PC-3 (cell line): ENCODE measurements at regions of chr7 and their contacts with region 1.

Region 1: DNA sequence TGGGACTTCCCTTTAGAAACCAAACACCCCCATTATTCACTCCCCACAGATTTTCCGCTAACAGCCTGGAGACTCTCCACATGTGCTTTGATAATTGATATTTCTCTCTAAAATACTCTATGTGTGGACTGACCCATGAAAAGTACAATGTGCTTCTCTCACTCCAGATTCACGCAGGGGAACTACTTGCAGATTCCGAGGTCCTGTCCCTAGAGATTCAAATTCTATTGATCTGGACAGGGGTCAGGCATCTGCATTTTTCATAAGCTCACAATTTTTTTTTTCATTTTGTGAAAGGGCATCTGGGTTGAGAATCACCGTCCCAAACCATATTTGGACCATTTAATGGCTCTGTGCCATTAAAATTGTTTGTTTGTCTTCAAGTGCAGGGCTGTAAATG is 98.7 kb downstream of the CALCR start:
- DNase-seq: no peak
- ATAC-seq: no peak
- H3K4me3 ChIP-seq: no peak overlapping the region
- H3K27ac ChIP-seq: no peak overlapping the region
- H3K4me1 ChIP-seq: no peaks in the 10 kb centered on the region
- H3K27me3 ChIP-seq: peaks cover 34% of the 10 kb centered on the region; the same call in 1 of the 2 replicates
- CTCF ChIP-seq: no peak

Region 2: GRCh38 chr7:93298671-93299070 is 177.1 kb before region 1 on chr7:
- CTCF ChIA-PET with region 1: no interaction called
- POLR2A ChIA-PET with region 1: no interaction called
- intact Hi-C with region 1: no loop called
- DNase-seq: no peak
- ATAC-seq: no peak
- H3K4me3 ChIP-seq: no peak overlapping the region
- H3K27ac ChIP-seq: no peak overlapping the region
- H3K4me1 ChIP-seq: no peaks in the 10 kb centered on the region
- H3K27me3 ChIP-seq: no peaks in the 10 kb centered on the region
- CTCF ChIP-seq: no peak

Region 3: GRCh38 chr7:93544691-93545090 is 68.9 kb after region 1 on chr7:
- CTCF ChIA-PET with region 1: no interaction called
- POLR2A ChIA-PET with region 1: no interaction called
- intact Hi-C with region 1: loop called (anchors 1 kb)
- DNase-seq: no peak
- ATAC-seq: no peak
- H3K4me3 ChIP-seq: no peak overlapping the region
- H3K27ac ChIP-seq: no peak overlapping the region
- H3K4me1 ChIP-seq: no peaks in the 10 kb centered on the region
- H3K27me3 ChIP-seq: peaks cover 48% of the 10 kb centered on the region
- CTCF ChIP-seq: no peak